ENCODE measurements at regions of chr12 and their contacts with region 1.

Region 1: GRCh38 chr12:67441736-67442346 is 172.7 kb downstream of the CAND1 start:
- DNase-seq: peak; percentile 92
- ATAC-seq: peak; percentile 98

Region 2: DNA sequence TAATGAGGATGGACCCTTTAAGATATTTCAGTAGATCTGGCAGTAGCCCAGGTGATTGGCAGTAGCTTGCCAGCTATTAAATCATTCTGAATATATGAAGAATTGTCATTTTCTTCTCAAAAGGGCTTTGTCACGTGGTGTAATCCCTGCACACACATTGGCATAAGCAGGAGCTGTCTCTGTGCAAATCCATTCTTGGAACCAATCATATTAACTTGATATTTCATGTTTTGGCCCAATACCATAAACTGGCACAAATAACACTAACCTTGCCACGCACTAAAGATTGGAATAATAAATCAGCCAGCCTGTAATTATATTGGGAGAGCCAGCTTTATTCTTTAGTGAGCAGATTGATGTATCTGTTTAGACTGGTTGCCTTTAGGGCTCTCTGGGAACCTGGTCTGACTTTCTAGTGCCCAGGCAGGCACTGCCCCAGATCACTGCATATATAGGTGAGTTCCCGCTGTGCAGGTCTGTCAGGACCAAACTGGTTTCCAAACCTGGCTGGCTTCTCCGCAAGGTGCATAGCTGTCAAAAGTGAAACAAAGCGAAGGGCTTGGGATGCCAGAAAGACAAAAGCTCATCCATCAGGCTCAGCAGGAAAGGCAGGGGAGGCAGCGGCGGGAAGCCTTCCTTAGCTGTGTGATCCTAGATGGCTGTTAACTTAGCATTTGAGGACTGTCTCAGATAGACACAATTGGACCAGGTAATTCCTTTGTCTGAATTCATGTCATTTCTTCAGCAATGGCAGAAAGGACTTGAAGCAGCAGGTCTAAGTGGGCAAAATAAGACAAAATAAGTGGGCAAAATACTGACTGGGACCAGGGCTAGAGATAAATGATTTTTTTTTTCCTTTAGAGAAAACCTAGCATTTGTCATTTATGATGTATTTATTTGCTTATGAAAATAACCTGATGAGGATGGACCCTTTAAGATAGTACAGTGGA is 77.9 kb after region 1 on chr12:
- intact Hi-C with region 1: loop called (anchors 10 kb)
- DNase-seq: no peak
- ATAC-seq: no peak